GM18951 (cell line): ENCODE measurements at regions of chr18 and their contacts with region 1.

Region 1: DNA sequence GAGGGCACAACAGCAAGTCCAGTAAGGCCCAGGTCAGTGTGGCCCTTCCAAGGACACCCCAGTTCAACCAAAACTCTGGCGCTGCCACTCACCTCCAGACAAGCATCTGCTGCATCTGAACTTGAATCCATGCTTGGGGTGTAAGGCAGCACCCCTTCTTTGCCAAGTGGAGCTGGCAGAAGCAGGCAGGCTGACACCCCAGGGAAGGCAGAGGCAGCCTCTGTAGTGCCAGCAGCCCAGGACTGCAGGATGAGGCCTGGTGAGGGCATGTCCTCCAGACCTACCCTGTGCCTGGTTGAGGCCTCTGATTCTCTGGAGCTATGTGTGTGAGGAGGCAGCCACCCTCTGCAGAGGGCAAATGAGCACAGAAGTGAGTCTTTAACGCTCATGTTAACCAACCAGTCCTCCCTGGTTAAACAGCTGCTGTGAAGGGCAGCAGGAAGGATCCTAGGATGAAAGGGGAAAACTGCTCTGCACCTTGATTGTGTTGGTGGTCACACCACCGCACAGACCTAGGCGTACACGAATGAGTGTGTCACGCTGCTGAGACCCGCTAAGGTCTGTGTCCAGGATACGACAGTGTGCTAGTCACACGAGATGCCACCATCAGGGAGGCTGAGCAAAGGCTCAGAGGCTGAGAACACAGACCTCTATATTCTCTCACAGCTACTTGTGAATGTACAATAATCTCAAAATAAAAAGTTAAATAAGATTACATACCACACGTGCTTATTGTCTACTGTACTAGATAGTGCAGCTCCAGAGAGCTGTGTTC is 2.2 kb downstream of the PARD6G start:
- POLR2A ChIP-seq: no peak

Region 2: GRCh38 chr18:80157708-80158343 is 87.3 kb before region 1 on chr18:
- in situ Hi-C with region 1: loop called (anchors 5 kb)
- POLR2A ChIP-seq: no peak